ENCODE measurements at regions of chr7 and their contacts with region 1.

Region 1: DNA sequence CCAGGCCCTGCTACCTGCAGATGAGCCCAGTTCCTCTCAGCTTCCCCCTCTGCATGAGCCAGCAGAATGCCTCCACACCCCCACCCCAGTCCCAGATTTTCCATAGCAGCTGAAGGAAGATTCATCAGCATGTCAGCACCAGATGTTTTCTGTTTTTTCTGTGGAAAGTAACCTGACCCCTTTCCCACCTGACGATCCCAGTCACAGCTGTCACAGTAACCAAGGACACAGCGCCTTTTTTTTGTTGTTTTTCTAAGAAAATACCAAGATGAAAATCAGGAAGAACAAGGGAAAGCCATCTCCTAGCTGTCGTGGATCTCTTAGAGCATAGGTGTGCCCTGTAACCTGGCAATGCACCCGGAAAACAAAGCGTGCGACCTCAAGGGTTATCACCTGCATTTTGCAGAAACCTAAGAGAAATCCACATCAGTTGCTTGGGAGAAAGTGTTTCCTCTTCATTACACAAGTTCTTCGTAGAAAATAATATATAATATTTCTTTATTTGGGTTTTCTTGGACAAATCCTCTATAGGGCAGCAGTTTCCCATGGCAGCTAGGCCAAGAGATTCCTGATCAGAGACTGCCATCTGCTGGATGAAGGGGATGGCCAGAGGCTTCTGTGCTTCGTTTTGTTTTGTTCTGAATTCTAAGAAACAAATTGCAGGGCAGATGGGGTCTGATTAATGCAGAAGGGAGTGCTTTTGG is 401.9 kb downstream of the TNS3 start:
- DNase-seq: peak; percentile 33
- ATAC-seq: peak; percentile 88
- H3K4me3 ChIP-seq: no peak overlapping the region
- H3K27ac ChIP-seq: no peak overlapping the region
- H3K4me1 ChIP-seq: no peaks in the 10 kb centered on the region
- H3K27me3 ChIP-seq: peaks cover 5% of the 10 kb centered on the region; the same call in 1 of the 2 replicates
- CTCF ChIP-seq: peak; percentile 74 to 85 (median 77); a peak in 5 of 6 replicates
- POLR2A ChIP-seq: no peak
- RAD21 ChIP-seq: peak; percentile 88

Region 2: GRCh38 chr7:45890902-45891461 is 1289.0 kb before region 1 on chr7:
- CTCF ChIA-PET with region 1: interaction called, 4 read pairs
- POLR2A ChIA-PET with region 1: no interaction called
- RAD21 ChIA-PET with region 1: no interaction called
- intact Hi-C with region 1: loop called (anchors 10 kb)
- DNase-seq: peak; percentile 22
- ATAC-seq: 0 out of 2 replicates have a peak, but pooled peaks have one; percentile 40
- H3K4me3 ChIP-seq: no peak overlapping the region
- H3K27ac ChIP-seq: no peak overlapping the region
- H3K4me1 ChIP-seq: peaks cover 0 to under 1% of the 10 kb centered on the region in 2 experiments; a peak in 3 of 4 replicates
- H3K27me3 ChIP-seq: no peaks in the 10 kb centered on the region
- CTCF ChIP-seq: peak; percentile 38 to 78 (median 63); a peak in 4 of 6 replicates
- POLR2A ChIP-seq: no peak
- RAD21 ChIP-seq: peak; percentile 77

Region 3: GRCh38 chr7:45923290-45923689 is 1256.7 kb before region 1 on chr7:
- CTCF ChIA-PET with region 1: interaction called, 15 read pairs
- POLR2A ChIA-PET with region 1: no interaction called
- RAD21 ChIA-PET with region 1: no interaction called
- intact Hi-C with region 1: no loop called
- DNase-seq: no peak
- ATAC-seq: peak; percentile 45; the same call in 1 of the 2 replicates
- H3K4me3 ChIP-seq: no peak overlapping the region
- H3K27ac ChIP-seq: no peak overlapping the region
- H3K4me1 ChIP-seq: peaks cover 3 to 27% of the 10 kb centered on the region in 2 experiments; a peak in 2 of 4 replicates
- H3K27me3 ChIP-seq: peaks cover 8% of the 10 kb centered on the region; the same call in 1 of the 2 replicates
- CTCF ChIP-seq: peak; percentile 82 to 97 (median 93)
- POLR2A ChIP-seq: no peak
- RAD21 ChIP-seq: peak; percentile 93

Region 4: GRCh38 chr7:46352004-46352954 is 827.7 kb before region 1 on chr7:
- CTCF ChIA-PET with region 1: no interaction called
- POLR2A ChIA-PET with region 1: no interaction called
- RAD21 ChIA-PET with region 1: no interaction called
- intact Hi-C with region 1: loop called (anchors 5 kb)
- DNase-seq: peak; percentile 56
- ATAC-seq: peak; percentile 86
- H3K4me3 ChIP-seq: no peak overlapping the region
- H3K27ac ChIP-seq: no peak overlapping the region
- H3K4me1 ChIP-seq: no peaks in the 10 kb centered on the region
- H3K27me3 ChIP-seq: no peaks in the 10 kb centered on the region
- CTCF ChIP-seq: peak; percentile 56 to 84 (median 76); a peak in 5 of 6 replicates
- POLR2A ChIP-seq: no peak
- RAD21 ChIP-seq: peak; percentile 90

Region 5: GRCh38 chr7:47361746-47362215 is 181.8 kb after region 1 on chr7:
- CTCF ChIA-PET with region 1: no interaction called
- POLR2A ChIA-PET with region 1: no interaction called
- RAD21 ChIA-PET with region 1: no interaction called
- intact Hi-C with region 1: no loop called
- DNase-seq: peak; percentile 59
- ATAC-seq: peak; percentile 69
- H3K4me3 ChIP-seq: no peak overlapping the region
- H3K27ac ChIP-seq: no peak overlapping the region
- H3K4me1 ChIP-seq: peaks cover 13% of the 10 kb centered on the region in 2 experiments
- H3K27me3 ChIP-seq: no peaks in the 10 kb centered on the region
- CTCF ChIP-seq: no peak
- POLR2A ChIP-seq: no peak
- RAD21 ChIP-seq: no peak

Region 6: DNA sequence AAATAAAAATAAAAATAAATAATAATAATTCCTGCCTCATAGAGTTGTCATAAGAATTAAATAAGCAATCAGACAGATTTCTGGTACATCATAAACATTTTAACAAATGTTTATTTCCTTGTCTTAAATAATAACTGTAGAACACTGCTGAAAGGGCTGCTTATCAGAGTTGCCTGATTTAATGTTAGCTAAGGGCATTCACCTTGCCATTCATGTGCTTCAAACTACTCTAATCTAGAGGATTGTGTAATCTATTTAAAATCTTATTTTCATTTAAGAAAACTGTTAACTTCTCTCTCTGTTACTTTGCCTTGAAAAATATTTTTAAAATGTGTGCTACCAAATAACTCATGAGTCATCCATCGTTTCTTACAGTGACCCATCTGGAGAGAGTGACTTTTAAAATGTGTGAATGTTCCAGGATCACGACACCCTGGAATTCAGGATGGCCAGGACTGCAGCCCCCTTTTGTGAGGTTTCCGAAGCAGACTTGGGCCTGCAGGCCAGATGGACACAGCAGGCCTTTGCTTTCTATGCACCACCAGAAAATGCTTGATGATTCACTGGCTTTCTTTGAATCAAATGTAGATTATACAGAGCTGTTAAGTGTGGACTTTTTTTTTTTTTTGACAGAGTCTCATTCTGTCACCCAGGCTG is 511.1 kb after region 1 on chr7:
- CTCF ChIA-PET with region 1: no interaction called
- POLR2A ChIA-PET with region 1: no interaction called
- RAD21 ChIA-PET with region 1: no interaction called
- intact Hi-C with region 1: no loop called
- DNase-seq: no peak
- ATAC-seq: no peak
- H3K4me3 ChIP-seq: no peak overlapping the region
- H3K27ac ChIP-seq: no peak overlapping the region
- H3K4me1 ChIP-seq: peaks cover 0 to 2% of the 10 kb centered on the region in 2 experiments; a peak in 1 of 4 replicates
- H3K27me3 ChIP-seq: no peaks in the 10 kb centered on the region
- CTCF ChIP-seq: no peak
- POLR2A ChIP-seq: no peak
- RAD21 ChIP-seq: no peak

Measured in HCT116 (cell line).